T-cell (primary cell): ENCODE measurements at regions of chr6 and their contacts with region 1.

Region 1: DNA sequence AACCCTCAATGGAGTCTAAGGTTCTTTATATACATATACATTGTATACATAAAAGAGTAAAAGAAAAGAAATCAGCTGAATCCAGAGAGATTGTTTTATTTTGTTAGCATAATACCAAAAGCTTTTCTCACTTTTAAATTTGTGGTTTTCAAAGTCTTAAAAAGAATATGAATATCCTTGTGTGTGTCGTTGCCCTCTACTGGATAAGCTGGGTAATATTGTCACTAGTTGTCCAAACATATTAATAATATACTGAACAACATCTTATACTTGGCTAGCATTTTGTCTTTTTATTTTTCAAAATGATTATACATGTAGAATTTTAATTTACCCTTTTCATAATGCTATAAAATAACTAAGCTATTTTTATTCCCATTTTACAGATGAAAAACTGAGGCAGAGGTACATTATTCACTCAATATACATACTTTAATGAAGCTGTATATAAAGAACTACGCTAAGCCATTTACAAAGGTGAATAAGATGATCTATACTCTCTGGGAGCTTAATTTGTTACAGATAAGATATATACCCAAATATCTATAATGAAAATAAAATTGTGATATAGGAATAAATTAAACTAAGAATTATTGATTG is 531.7 kb downstream of the TFAP2B start:
- DNase-seq: no peak
- ATAC-seq: no peak
- H3K4me3 ChIP-seq: no peak overlapping the region
- H3K4me3 Mint-ChIP-seq: no peak overlapping the region
- H3K27ac ChIP-seq: no peak overlapping the region
- H3K27ac Mint-ChIP-seq: no peak overlapping the region
- H3K4me1 ChIP-seq: no peaks in the 10 kb centered on the region
- H3K4me1 Mint-ChIP-seq: no peaks in the 10 kb centered on the region
- H3K27me3 ChIP-seq: no peaks in the 10 kb centered on the region
- H3K27me3 Mint-ChIP-seq: no peaks in the 10 kb centered on the region

Region 2: DNA sequence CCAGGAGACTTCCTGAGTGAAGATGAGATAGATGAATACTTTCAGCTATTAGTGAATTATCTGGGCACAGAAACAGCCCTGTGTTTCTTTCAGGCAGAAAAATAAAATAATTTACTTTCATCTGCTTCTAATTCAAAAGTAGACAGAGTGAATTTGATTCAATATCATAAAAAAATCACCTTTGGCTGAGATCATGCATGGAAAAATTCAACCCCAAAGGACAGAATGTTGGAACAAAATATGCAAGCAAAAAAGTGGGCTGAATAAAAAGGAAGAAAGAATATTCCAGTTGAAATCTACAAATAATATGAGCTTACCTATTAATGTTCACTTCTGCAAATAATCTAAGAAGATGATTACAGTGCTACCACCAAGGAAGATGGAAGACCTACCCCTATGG is 15.2 kb after region 1 on chr6:
- CTCF ChIA-PET with region 1: interaction called in 1 of 2 experiments, 10 read pairs
- POLR2A ChIA-PET with region 1: no interaction called
- DNase-seq: no peak
- ATAC-seq: no peak
- H3K4me3 ChIP-seq: no peak overlapping the region
- H3K4me3 Mint-ChIP-seq: no peak overlapping the region
- H3K27ac ChIP-seq: no peak overlapping the region
- H3K27ac Mint-ChIP-seq: no peak overlapping the region
- H3K4me1 ChIP-seq: no peaks in the 10 kb centered on the region
- H3K4me1 Mint-ChIP-seq: no peaks in the 10 kb centered on the region
- H3K27me3 ChIP-seq: peaks cover 0 to 2% of the 10 kb centered on the region in 2 experiments
- H3K27me3 Mint-ChIP-seq: no peaks in the 10 kb centered on the region